Calu3 (cell line): ENCODE measurements at regions of chr17 and their contacts with region 1.

Region 1: GRCh38 chr17:73156166-73156840 is 8.5 kb upstream of the SSTR2 start:
- DNase-seq: peak; percentile 82
- H3K4me3 Mint-ChIP-seq: peak overlapping the region; percentile 32
- H3K27ac Mint-ChIP-seq: no peak overlapping the region
- H3K4me1 Mint-ChIP-seq: peaks cover 26% of the 10 kb centered on the region
- H3K27me3 Mint-ChIP-seq: peaks cover 22% of the 10 kb centered on the region
- CTCF ChIP-seq: peak; percentile 52

Region 2: GRCh38 chr17:72984145-72984925 is 172.0 kb before region 1 on chr17:
- CTCF ChIA-PET with region 1: interaction called, 3 read pairs
- intact Hi-C with region 1: loop called (anchors 5 kb)
- DNase-seq: peak; percentile 54
- H3K4me3 Mint-ChIP-seq: no peak overlapping the region
- H3K27ac Mint-ChIP-seq: peak overlapping the region; percentile 95
- H3K4me1 Mint-ChIP-seq: peaks cover 42% of the 10 kb centered on the region
- H3K27me3 Mint-ChIP-seq: no peaks in the 10 kb centered on the region
- CTCF ChIP-seq: no peak

Region 3: GRCh38 chr17:73901661-73902415 is 745.5 kb after region 1 on chr17:
- CTCF ChIA-PET with region 1: no interaction called
- intact Hi-C with region 1: no loop called
- DNase-seq: peak; percentile 21
- H3K4me3 Mint-ChIP-seq: peak overlapping the region; percentile 43
- H3K27ac Mint-ChIP-seq: no peak overlapping the region
- H3K4me1 Mint-ChIP-seq: no peaks in the 10 kb centered on the region
- H3K27me3 Mint-ChIP-seq: peaks cover 65% of the 10 kb centered on the region
- CTCF ChIP-seq: no peak